ENCODE measurements at regions of chr11 and their contacts with region 1.

Region 1: GRCh38 chr11:130020323-130020722 is 17.7 kb upstream of the PRDM10 start:
- DNase-seq: no peak
- ATAC-seq: no peak
- H3K4me3 ChIP-seq: no peak overlapping the region
- H3K27ac ChIP-seq: no peak overlapping the region
- H3K4me1 ChIP-seq: no peaks in the 10 kb centered on the region
- H3K27me3 ChIP-seq: peaks cover 0 to 2% (median 0%) of the 10 kb centered on the region in 3 donors
- CTCF ChIP-seq: no peak

Region 2: DNA sequence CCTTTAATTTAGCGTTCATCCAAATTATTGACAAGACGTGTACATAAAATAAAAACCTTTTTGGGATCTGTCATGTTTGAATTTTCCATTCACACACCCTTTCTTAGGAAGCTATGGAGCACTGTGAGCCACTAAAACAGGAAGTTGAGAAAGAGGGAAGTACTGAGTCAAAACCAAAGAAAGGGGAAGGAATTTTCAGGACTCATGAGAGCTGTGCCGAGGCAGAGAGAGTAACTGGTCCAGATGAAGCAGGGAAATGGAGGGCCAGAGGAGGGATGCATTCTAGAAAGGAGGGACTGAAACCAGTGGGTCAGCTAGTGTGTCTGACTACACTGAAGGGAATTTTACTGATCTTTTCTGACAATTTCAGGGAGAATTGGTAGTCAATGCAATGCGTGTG is 74.3 kb after region 1 on chr11:
- intact Hi-C with region 1: loop called in 1 of 2 experiments (anchors 2 kb)
- DNase-seq: no peak
- ATAC-seq: no peak
- H3K4me3 ChIP-seq: no peak overlapping the region
- H3K27ac ChIP-seq: no peak overlapping the region
- H3K4me1 ChIP-seq: peaks cover 3% of the 10 kb centered on the region
- H3K27me3 ChIP-seq: no peaks in the 10 kb centered on the region
- CTCF ChIP-seq: no peak